ENCODE measurements at regions of chr4 and their contacts with region 1.

Region 1: DNA sequence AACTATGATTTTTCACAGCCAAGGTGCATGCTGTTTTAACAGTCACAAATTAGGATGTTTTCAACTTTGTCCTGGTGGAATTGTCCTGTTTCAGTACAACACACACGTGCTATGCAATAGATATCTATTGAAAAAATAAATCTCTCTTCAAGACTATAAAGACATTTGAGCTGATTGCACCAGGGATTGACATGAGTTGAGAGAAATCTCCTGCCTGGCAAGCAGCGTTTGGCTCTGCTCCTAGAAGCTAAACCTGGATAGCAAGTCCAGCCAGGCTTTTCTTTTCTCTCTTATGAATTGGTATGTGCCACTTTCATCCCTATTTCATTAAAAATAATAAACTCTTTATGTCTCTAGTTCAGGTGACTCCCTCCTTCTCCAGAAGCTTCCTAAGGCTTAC is 16.6 kb upstream of the NPNT start:
- DNase-seq: no peak
- ATAC-seq: no peak
- H3K4me3 ChIP-seq: no peak overlapping the region
- H3K27ac ChIP-seq: no peak overlapping the region
- H3K4me1 ChIP-seq: no peaks in the 10 kb centered on the region
- H3K27me3 ChIP-seq: no peaks in the 10 kb centered on the region
- CTCF ChIP-seq: no peak
- POLR2A ChIP-seq: no peak
- RAD21 ChIP-seq: no peak

Region 2: DNA sequence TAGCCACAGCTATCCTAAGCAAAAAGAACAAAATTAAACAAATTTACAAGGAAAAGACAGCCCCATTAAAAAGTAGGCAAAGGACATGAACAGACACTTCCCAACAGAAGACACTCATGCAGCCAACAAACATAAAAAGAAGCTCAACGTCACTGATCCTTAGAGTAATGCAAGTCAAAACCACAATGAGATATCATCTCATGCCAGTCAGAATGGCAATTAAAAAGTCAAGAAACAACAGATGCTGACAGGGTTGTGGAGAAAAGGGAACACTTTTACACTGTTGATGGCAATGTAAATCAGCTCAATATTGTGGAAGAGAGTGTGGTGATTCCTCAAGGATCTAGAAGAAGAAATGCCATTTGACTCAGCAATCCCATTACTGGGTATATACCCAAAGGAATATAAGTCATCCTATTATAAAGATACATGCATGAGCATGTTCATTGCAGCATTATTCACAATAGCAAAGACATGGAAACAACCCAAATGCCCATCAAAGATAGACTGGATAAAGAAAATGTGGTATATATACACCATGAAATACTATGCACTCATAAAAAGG is 895.0 kb before region 1 on chr4:
- CTCF ChIA-PET with region 1: no interaction called
- POLR2A ChIA-PET with region 1: no interaction called
- dilution Hi-C with region 1: no loop called
- in situ Hi-C with region 1: no loop called
- intact Hi-C with region 1: no loop called
- DNase-seq: no peak
- ATAC-seq: no peak
- H3K4me3 ChIP-seq: no peak overlapping the region
- H3K27ac ChIP-seq: no peak overlapping the region
- H3K4me1 ChIP-seq: no peaks in the 10 kb centered on the region
- H3K27me3 ChIP-seq: no peaks in the 10 kb centered on the region
- CTCF ChIP-seq: no peak
- POLR2A ChIP-seq: no peak
- RAD21 ChIP-seq: no peak

Region 3: DNA sequence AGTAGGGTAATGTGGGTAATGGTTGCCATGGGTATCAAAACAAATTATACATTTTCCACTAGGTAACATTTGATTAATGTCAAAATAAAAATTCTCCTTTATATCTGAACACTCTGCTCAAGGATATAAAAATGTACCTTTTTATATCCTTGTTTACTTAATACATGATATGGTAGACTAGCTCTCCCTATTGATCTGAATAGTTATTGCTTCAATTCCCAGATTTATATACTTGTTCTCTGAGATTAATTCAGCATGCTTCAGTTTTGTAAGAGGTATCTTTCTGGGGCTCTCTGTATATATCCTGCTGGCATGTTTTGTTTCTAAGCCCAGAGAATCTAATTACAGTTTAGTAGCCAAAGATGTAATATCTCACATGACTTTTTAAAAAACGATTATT is 186.3 kb after region 1 on chr4:
- CTCF ChIA-PET with region 1: no interaction called
- POLR2A ChIA-PET with region 1: no interaction called
- dilution Hi-C with region 1: no loop called
- in situ Hi-C with region 1: no loop called
- intact Hi-C with region 1: no loop called
- DNase-seq: no peak
- ATAC-seq: no peak
- H3K4me3 ChIP-seq: no peak overlapping the region
- H3K27ac ChIP-seq: no peak overlapping the region
- H3K4me1 ChIP-seq: no peaks in the 10 kb centered on the region
- H3K27me3 ChIP-seq: no peaks in the 10 kb centered on the region; the same call in 1 of the 2 replicates
- CTCF ChIP-seq: no peak
- POLR2A ChIP-seq: no peak
- RAD21 ChIP-seq: no peak

Region 4: GRCh38 chr4:106418444-106418843 is 539.8 kb after region 1 on chr4:
- CTCF ChIA-PET with region 1: no interaction called
- POLR2A ChIA-PET with region 1: no interaction called
- dilution Hi-C with region 1: no loop called
- in situ Hi-C with region 1: no loop called
- intact Hi-C with region 1: loop called (anchors 5 kb)
- DNase-seq: no peak
- ATAC-seq: no peak
- H3K4me3 ChIP-seq: no peak overlapping the region
- H3K27ac ChIP-seq: no peak overlapping the region
- H3K4me1 ChIP-seq: peaks cover 3% of the 10 kb centered on the region; the same call in 1 of the 2 replicates
- H3K27me3 ChIP-seq: no peaks in the 10 kb centered on the region
- CTCF ChIP-seq: no peak
- POLR2A ChIP-seq: no peak
- RAD21 ChIP-seq: no peak